Activated CD4-positive, alpha-beta T cell treated with anti-CD3 and anti-CD28 coated beads for 36 hours (primary cell): ENCODE measurements at regions of chr16 and their contacts with region 1.

Region 1: GRCh38 chr16:47141773-47142485 is 1.8 kb downstream of the NETO2 start:
- DNase-seq: peak; percentile 91
- ATAC-seq: peak; percentile 79
- H3K4me3 Mint-ChIP-seq: peak overlapping the region; percentile 75
- H3K27ac Mint-ChIP-seq: peak overlapping the region; percentile 58
- H3K4me1 Mint-ChIP-seq: peaks cover 35% of the 10 kb centered on the region
- H3K27me3 Mint-ChIP-seq: peaks cover 21% of the 10 kb centered on the region

Region 2: GRCh38 chr16:46883690-46884512 is 258.0 kb before region 1 on chr16 and contains the start of gene GPT2:
- CTCF ChIA-PET with region 1: no interaction called
- POLR2A ChIA-PET with region 1: no interaction called
- intact Hi-C with region 1: loop called in 1 of 2 experiments (anchors 5 kb)
- DNase-seq: peak; percentile 91
- ATAC-seq: peak; percentile 96
- H3K4me3 Mint-ChIP-seq: peak within 1 kb of the TSS; percentile 80
- H3K27ac Mint-ChIP-seq: peak within 1 kb of the TSS; percentile 94
- H3K4me1 Mint-ChIP-seq: peaks cover 10% of the 10 kb centered on the region
- H3K27me3 Mint-ChIP-seq: peaks cover 24% of the 10 kb centered on the region
- total RNA-seq, gene GPT2: 25.6 to 34.9 TPM

Region 3: GRCh38 chr16:47037746-47038458 is 104.0 kb before region 1 on chr16:
- CTCF ChIA-PET with region 1: interaction called, 16 read pairs
- POLR2A ChIA-PET with region 1: no interaction called
- intact Hi-C with region 1: loop called (anchors 1 to 2 kb)
- DNase-seq: peak; percentile 94
- ATAC-seq: peak; percentile 98
- H3K4me3 Mint-ChIP-seq: peak overlapping the region; percentile 65
- H3K27ac Mint-ChIP-seq: no peak overlapping the region
- H3K4me1 Mint-ChIP-seq: peaks cover 2% of the 10 kb centered on the region
- H3K27me3 Mint-ChIP-seq: peaks cover 8% of the 10 kb centered on the region

Region 4: GRCh38 chr16:47236716-47237115 is 94.8 kb after region 1 on chr16:
- CTCF ChIA-PET with region 1: no interaction called
- POLR2A ChIA-PET with region 1: no interaction called
- intact Hi-C with region 1: no loop called
- DNase-seq: no peak
- ATAC-seq: no peak
- H3K4me3 Mint-ChIP-seq: no peak overlapping the region
- H3K27ac Mint-ChIP-seq: no peak overlapping the region
- H3K4me1 Mint-ChIP-seq: no peaks in the 10 kb centered on the region
- H3K27me3 Mint-ChIP-seq: no peaks in the 10 kb centered on the region

Region 5: DNA sequence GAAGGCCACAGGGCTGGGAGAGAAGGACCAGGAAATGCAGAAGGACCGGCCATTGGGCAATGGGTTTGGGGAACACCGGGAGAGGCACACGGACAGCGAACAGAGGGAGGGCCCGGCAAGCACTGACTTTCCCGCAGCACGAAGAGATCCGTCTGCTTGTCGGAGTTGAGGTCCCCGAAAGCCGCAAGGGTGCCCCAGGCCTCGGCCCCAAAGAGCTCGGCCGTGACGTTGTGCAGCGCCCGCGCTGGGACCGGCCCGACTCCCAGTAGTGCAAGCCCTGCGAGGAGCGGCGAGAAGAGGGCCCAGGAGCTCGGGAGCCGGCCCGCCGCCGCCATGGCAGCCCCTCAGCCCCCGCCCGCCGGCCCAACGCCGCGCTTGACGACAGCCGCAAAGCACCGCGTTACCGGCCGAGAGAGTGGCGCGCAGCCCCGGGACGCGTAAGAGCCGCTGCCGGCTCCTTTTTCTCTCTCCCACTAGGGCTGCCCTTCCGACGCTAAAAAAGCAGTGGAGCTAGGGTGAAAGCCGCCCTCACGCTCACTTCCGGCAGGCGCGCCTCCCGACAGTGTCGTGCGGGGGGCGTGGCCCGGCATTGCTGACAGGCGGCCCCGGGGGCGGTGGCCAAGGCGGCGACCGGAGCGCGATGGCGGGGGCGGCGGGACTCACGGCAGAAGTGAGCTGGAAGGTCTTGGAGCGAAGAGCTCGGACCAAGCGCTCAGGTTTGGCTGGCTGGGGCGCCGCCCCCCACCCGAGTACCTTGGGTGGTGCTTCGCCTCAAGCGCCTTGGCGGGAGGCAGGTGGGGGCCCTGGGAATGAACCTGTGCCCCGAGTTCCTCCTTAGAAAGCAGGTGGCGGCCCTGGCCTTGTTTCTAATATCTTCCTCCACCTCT is 319.0 kb after region 1 on chr16 and contains the starts of genes ITFG1 and PHKB:
- CTCF ChIA-PET with region 1: interaction called, 13 read pairs
- POLR2A ChIA-PET with region 1: interaction called, 3 read pairs
- intact Hi-C with region 1: loop called (anchors 1 to 2 kb)
- DNase-seq: peak; percentile 97
- ATAC-seq: peak; percentile 95
- H3K4me3 Mint-ChIP-seq: peak within 1 kb of the TSS; percentile 97
- H3K27ac Mint-ChIP-seq: peak within 1 kb of the TSS; percentile 97
- H3K4me1 Mint-ChIP-seq: peaks cover 58% of the 10 kb centered on the region
- H3K27me3 Mint-ChIP-seq: no peaks in the 10 kb centered on the region
- total RNA-seq, gene ITFG1: 18.9 to 27.0 TPM
- total RNA-seq, gene PHKB: 12.6 to 12.8 TPM

Region 6: GRCh38 chr16:48054881-48055601 is 913.1 kb after region 1 on chr16:
- CTCF ChIA-PET with region 1: interaction called, 5 read pairs
- POLR2A ChIA-PET with region 1: no interaction called
- intact Hi-C with region 1: loop called (anchors 1 to 5 kb)
- DNase-seq: peak; percentile 64
- ATAC-seq: peak; percentile 61
- H3K4me3 Mint-ChIP-seq: no peak overlapping the region
- H3K27ac Mint-ChIP-seq: no peak overlapping the region
- H3K4me1 Mint-ChIP-seq: peaks cover 5% of the 10 kb centered on the region
- H3K27me3 Mint-ChIP-seq: peaks cover 20% of the 10 kb centered on the region

Region 7: DNA sequence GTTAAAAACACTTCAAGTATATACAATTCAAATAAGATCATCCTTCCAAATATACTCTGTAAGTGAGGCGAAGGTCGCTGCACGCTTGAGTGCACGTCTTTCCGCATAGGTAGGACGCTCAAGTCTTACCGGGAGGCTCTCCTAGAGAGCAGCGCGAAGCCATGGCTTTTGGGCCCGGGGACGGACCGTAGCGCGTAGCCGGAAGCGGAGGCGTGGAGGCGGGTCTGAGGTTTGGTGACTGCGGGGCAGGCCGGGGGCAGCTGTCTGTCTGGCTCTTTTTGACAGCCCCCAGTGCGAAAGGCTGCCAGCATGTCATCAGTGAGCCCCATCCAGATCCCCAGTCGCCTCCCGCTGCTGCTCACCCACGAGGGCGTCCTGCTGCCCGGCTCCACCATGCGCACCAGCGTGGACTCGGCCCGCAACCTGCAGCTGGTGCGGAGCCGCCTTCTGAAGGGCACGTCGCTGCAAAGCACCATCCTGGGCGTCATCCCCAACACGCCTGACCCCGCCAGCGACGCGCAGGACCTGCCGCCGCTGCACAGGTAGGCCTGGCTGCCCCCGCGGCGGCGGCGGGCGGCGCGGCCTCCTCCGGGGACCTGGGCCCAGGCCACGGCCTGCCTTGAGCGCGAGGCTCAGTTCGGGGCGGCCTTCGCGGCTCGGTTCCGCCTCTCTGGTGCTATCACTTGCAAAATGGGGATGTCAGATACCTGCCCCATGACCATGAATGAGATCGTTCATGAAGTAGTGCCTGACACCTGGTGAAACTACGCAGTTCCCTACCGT is 1102.3 kb after region 1 on chr16 and contains the start of gene LONP2:
- CTCF ChIA-PET with region 1: no interaction called
- POLR2A ChIA-PET with region 1: no interaction called
- intact Hi-C with region 1: loop called in 1 of 2 experiments (anchors 10 kb)
- DNase-seq: peak; percentile 95
- ATAC-seq: peak; percentile 94
- H3K4me3 Mint-ChIP-seq: peak within 1 kb of the TSS; percentile 91
- H3K27ac Mint-ChIP-seq: peak within 1 kb of the TSS; percentile 88
- H3K4me1 Mint-ChIP-seq: peaks cover 36% of the 10 kb centered on the region
- H3K27me3 Mint-ChIP-seq: no peaks in the 10 kb centered on the region
- total RNA-seq, gene LONP2: 60.3 to 63.2 TPM